GM10248 (cell line): ENCODE measurements at regions of chr17 and their contacts with region 1.

Region 1: GRCh38 chr17:19362277-19363113 is at the start of gene B9D1:
- DNase-seq: peak; percentile 99
- CTCF ChIP-seq: peak; percentile 97

Region 2: DNA sequence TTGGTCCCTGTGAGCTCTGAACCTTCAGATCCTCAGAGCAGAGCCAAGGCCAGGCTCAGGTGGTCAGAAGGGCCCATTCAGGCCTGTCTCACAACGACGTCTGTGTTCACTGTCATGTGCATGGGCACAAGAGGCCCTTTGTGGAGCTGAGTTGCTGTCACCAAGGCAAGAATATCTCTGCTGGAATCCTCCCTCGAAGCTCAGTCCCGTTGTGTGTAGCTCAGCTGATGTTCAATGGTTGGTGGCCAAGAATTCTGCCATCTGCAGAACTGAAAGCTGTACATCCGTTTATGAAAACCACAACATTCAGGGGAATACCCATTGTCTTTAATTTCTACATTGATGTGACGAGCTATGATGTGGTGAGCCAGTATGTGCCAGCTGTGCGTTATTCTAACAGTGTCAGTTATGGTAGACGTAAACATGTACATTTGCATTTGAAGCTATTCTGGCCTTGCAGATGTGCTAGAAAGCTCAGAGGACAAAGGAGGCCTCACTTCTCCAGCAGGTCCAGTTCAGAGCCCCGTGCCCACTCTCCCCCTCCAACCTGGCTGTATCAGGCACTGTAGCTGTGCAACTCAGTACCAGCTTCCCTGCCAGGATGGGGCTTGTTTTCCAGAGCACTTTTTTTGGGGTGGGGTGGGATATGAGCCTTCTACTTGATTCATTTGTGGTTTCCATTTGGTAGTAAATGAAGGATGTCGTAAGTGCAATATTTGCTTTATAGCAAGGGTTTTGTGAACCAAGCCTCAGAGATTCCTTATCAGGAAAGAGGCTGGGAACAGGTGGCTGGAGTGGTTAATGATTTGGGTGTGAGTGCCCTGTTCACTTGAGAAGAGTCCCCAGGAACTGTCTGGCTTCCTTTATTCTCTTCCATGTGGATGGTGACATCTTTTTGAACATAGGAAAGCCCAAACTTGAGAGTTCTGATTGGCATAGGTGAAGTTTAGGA is 56.1 kb before region 1 on chr17:
- CTCF ChIA-PET with region 1: interaction called, 10 read pairs
- POLR2A ChIA-PET with region 1: no interaction called
- DNase-seq: peak; percentile 73
- CTCF ChIP-seq: no peak

Region 3: DNA sequence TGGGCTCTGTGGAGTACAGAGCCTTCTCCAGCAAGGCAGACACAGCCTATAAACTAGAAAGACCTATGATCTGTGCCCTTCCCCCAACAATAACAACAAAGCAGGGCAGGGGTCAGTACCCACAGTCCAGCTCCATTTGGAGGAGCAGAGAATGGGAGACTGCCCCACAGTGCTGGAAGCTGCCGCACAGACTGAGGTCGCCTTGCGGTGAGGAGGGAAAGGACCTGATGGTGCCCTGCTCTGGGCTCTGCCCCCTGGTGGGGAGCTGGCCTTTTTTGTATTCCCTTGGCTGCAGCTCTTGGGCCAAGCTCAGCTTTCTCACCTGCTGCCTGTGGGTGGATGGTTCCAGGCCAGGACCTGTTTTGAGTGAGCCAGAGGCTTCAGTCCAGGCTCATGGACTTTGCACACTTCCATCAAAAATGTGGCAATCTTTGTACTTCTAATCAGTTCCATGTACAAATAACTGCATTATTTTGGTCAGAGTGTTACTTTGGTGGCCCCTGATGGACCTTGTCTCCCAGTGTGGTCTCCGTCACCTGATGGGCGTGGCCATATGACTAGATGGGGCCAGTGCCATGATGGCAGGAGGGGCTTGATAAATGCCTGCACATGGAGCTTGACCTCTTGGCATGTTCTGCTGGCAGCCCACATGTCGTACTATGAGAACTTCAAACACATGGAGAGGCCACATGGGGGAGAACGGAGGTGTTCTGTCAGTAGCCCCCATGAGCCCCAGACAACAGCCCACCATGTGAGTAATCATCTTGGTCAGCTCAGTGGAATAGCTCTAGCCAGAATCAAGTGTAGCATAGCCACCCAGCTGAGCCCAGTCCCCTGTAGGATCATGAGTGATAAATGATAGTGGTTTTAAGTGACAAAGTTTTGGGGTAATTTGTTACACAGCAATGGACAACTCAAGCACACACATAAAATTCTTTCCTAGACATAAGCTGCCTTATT is 24.2 kb before region 1 on chr17:
- CTCF ChIA-PET with region 1: interaction called, 17 read pairs
- POLR2A ChIA-PET with region 1: no interaction called
- DNase-seq: peak; percentile 84
- CTCF ChIP-seq: peak; percentile 66

Region 4: DNA sequence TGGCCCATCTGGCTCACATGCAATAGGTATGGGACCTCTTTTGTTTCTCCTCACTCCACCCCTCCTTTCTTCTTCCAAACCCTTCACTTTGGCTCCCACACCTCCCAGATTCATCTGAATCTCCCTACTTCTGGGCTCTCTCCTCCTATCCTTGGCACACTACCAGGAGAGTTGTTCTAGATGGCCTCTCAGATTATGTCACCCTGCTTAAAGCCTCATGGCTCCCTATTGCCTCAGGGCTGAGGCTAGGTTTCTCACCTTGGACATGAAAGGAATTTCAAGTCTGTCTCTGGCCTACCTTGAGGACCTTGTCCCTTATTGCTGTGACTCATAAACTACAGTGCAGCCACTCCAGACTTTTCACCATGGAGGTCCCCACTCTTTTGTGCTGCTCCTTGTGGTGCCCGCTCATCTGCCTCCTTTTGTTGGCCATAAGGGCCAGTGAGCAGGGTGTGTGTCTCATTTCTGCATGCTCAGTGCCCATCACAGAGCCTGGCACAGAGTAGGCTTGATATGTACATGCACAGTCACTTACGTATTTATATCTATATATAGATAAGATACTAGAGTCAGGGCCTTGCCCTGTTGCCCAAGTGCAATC is 25.5 kb after region 1 on chr17:
- CTCF ChIA-PET with region 1: interaction called, 18 read pairs
- POLR2A ChIA-PET with region 1: no interaction called
- DNase-seq: no peak
- CTCF ChIP-seq: no peak

Region 5: DNA sequence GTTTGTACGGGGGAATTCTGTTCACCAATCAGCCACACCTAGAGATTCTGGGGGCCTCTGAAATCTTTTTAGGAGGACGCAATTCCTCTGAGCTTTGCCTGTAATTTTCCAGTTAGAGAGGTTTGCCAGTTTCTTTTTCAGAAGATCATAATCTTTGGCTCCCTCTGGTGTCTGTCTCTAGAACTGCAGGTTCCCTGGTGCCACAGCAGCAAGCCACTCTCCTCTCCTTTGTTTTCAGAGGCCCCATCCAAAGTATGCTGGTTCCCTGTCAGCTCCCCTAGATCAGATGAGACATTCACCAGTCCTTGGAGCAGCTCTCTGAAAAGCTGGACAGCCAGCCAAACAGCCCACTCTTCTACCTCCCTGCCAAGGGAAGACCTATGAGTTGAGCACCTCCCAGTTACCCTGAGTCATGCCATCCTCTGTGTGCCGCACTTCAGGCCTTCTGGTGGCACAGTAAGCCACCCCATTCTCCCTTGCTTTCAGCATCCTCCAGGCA is 84.6 kb after region 1 on chr17:
- CTCF ChIA-PET with region 1: interaction called, 71 read pairs
- POLR2A ChIA-PET with region 1: no interaction called
- DNase-seq: peak; percentile 81
- CTCF ChIP-seq: peak; percentile 76

Region 6: DNA sequence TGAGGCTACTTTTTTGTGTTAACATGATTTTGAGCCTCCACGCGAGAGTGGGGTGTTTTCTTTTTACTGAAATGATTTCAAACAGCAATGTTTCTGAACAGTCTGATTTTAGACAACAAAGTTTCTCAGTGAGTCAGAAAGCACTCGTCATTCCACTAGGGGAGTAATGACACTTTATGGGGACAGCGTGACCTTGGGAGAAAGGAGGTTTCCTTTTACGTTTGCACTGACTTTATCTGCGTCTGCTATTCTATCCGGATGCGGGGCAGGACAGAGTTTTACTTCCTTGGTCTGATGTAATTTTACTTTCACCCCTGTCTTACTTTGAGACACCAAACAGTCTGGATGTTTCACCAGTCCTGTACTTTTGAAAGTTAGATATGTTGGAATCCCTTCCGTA is 191.9 kb after region 1 on chr17:
- CTCF ChIA-PET with region 1: no interaction called
- POLR2A ChIA-PET with region 1: no interaction called
- DNase-seq: no peak
- CTCF ChIP-seq: no peak

Region 7: DNA sequence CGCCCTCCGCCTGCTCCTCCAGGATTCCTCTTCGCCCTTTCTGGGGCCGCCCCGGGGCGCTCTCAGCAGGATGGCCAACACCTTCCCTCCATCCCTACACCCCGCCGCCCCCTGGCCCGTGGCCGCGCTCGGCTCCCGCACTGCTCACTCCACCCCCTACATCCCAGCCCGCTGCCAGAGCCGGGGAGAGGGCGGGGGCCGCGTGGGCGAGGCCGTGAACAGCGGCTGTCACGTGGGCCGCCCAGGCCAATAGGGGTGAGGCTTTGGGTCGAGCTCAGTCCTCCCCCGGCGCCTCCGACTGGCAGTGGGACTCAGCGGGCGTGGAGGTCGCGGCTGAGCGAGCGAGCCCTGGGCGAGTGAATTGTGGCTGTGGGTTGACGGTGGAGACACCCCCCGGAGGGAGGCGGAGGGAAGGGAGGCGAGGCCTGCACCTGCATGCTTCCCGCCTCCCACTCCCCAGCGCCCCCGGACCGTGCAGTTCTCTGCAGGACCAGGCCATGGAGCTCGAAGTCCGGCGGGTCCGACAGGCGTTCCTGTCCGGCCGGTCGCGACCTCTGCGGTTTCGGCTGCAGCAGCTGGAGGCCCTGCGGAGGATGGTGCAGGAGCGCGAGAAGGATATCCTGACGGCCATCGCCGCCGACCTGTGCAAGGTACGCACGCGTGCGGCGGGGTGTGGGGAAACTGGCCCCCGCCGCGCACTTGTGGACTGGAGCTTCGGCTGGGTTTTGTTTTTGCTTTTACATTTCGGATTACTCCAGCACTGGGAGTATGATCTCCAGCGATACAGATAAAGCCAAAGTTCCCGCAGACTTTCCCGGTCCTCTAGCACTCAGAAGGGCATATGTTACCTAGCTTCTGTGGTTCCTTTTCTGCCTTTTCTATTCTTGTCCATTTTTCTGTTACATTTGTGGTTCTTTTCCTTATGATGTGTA is 286.2 kb after region 1 on chr17 and contains the start of gene ALDH3A2:
- CTCF ChIA-PET with region 1: interaction called, 16 read pairs
- POLR2A ChIA-PET with region 1: no interaction called
- DNase-seq: peak; percentile 99
- CTCF ChIP-seq: peak; percentile 30